ENCODE measurements at regions of chr9 and their contacts with region 1.

Region 1: GRCh38 chr9:109972026-109972882 is 192.3 kb downstream of the PALM2AKAP2 start:
- DNase-seq: peak; percentile 56
- H3K4me3 Mint-ChIP-seq: no peak overlapping the region
- H3K27ac Mint-ChIP-seq: peak overlapping the region; percentile 4
- H3K4me1 Mint-ChIP-seq: peaks cover 86% of the 10 kb centered on the region
- H3K27me3 Mint-ChIP-seq: no peaks in the 10 kb centered on the region

Region 2: GRCh38 chr9:109119439-109120203 is 852.6 kb before region 1 on chr9 and contains the start of gene TMEM245:
- CTCF ChIA-PET with region 1: no interaction called
- intact Hi-C with region 1: loop called (anchors 2 kb)
- DNase-seq: peak; percentile 97
- H3K4me3 Mint-ChIP-seq: peak within 1 kb of the TSS; percentile 90
- H3K27ac Mint-ChIP-seq: peak within 1 kb of the TSS; percentile 78
- H3K4me1 Mint-ChIP-seq: peaks cover 40% of the 10 kb centered on the region
- H3K27me3 Mint-ChIP-seq: no peaks in the 10 kb centered on the region
- total RNA-seq, gene TMEM245: 19.9 TPM

Region 3: DNA sequence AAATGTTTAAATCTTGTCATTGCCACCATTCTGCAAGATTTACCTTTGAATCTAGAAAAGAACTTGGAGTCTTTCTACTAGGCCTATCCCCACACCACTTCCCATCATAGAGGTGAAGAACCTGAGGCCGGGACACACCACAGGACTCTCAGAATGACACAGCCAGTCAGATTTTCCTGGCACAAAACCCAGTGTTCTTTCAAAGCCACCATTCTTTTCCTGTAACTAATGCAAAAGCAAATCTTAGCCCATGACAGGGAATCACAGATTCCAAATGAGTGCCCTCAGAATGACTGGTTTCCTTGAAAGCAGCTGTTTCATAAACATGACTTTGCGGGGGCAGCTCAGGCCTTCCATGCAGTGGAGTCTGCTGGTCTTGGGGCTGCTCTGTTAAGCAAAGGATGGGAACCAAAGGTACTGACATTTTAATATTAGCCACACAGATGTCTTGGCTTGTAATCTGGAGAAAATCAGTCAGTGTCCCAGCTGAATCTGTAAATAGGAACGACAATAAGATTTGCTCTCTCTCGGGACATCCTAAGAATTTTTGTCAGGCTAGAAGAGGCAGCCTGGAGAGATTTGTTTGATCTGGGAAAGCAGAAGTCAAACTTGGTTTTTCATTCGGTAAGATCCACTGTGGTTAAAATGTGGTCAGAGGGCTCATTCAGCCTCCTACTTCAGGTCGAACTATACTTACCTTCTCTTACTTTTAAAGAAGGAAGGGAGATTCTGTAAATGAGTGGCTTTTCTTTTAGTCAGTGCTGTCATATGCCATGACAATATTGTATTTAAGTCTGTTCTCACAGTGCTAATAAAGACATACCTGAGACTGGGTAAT is 77.1 kb before region 1 on chr9:
- CTCF ChIA-PET with region 1: interaction called, 3 read pairs
- intact Hi-C with region 1: loop called (anchors 1 kb)
- DNase-seq: peak; percentile 89
- H3K4me3 Mint-ChIP-seq: peak overlapping the region; percentile 45
- H3K27ac Mint-ChIP-seq: peak overlapping the region; percentile 92
- H3K4me1 Mint-ChIP-seq: peaks cover 36% of the 10 kb centered on the region
- H3K27me3 Mint-ChIP-seq: no peaks in the 10 kb centered on the region

Region 4: GRCh38 chr9:109934857-109935215 is 37.4 kb before region 1 on chr9:
- CTCF ChIA-PET with region 1: interaction called, 4 read pairs
- intact Hi-C with region 1: loop called (anchors 1 kb)
- DNase-seq: peak; percentile 41
- H3K4me3 Mint-ChIP-seq: no peak overlapping the region
- H3K27ac Mint-ChIP-seq: peak overlapping the region; percentile 73
- H3K4me1 Mint-ChIP-seq: peaks cover 42% of the 10 kb centered on the region
- H3K27me3 Mint-ChIP-seq: no peaks in the 10 kb centered on the region

Region 5: GRCh38 chr9:110021891-110022290 is 49.6 kb after region 1 on chr9:
- CTCF ChIA-PET with region 1: no interaction called
- intact Hi-C with region 1: loop called (anchors 1 kb)
- DNase-seq: peak; percentile 12
- H3K4me3 Mint-ChIP-seq: no peak overlapping the region
- H3K27ac Mint-ChIP-seq: peak overlapping the region; percentile 37
- H3K4me1 Mint-ChIP-seq: peaks cover 9% of the 10 kb centered on the region
- H3K27me3 Mint-ChIP-seq: no peaks in the 10 kb centered on the region

Region 6: GRCh38 chr9:110143950-110144545 is 171.8 kb after region 1 on chr9:
- CTCF ChIA-PET with region 1: interaction called, 3 read pairs
- intact Hi-C with region 1: loop called (anchors 1 kb)
- DNase-seq: peak; percentile 72
- H3K4me3 Mint-ChIP-seq: no peak overlapping the region
- H3K27ac Mint-ChIP-seq: peak overlapping the region; percentile 16
- H3K4me1 Mint-ChIP-seq: peaks cover 46% of the 10 kb centered on the region
- H3K27me3 Mint-ChIP-seq: no peaks in the 10 kb centered on the region

Measured in activated naive CD4-positive, alpha-beta T cell treated with anti-CD3 and anti-CD28 coated beads for 36 hours (primary cell).